Aorta (tissue), 5 donors: ENCODE measurements at regions of chr11 and their contacts with region 1.

Region 1: GRCh38 chr11:101775033-101775432 is 139.8 kb upstream of the CEP126 start:
- DNase-seq: no peak
- ATAC-seq: no peak
- H3K4me3 ChIP-seq: no peak overlapping the region
- H3K27ac ChIP-seq: no peak overlapping the region
- H3K4me1 ChIP-seq: peaks cover 3 to 4% of the 10 kb centered on the region in 2 donors
- H3K27me3 ChIP-seq: no peaks in the 10 kb centered on the region

Region 2: DNA sequence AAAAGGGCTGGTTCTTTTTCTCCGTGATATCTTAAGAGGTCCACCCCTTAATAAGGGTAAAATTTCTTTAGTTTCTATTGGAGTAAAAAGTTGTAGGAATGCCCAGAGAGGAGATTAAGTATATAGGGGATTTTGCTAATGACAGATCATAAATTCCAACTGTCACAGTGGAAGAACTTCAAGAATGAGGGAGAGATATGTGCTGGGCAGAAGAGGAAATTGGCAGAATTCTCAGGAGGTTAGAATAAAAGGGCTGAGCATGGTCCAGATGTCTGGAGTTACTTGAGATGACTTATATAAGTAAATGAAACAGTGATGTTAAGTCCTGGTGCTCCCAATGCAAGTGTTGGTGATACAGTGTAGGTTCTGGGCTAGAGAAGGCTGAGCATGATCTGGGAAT is 1505.5 kb before region 1 on chr11:
- intact Hi-C with region 1: loop called in 1 of 2 experiments (anchors 10 kb)
- DNase-seq: no peak
- ATAC-seq: no peak
- H3K4me3 ChIP-seq: no peak overlapping the region
- H3K27ac ChIP-seq: no peak overlapping the region
- H3K4me1 ChIP-seq: no peaks in the 10 kb centered on the region
- H3K27me3 ChIP-seq: no peaks in the 10 kb centered on the region

Region 3: GRCh38 chr11:101807531-101807930 is 32.5 kb after region 1 on chr11:
- intact Hi-C with region 1: no loop called
- DNase-seq: no peak
- ATAC-seq: no peak
- H3K4me3 ChIP-seq: no peak overlapping the region
- H3K27ac ChIP-seq: no peak overlapping the region
- H3K4me1 ChIP-seq: no peaks in the 10 kb centered on the region
- H3K27me3 ChIP-seq: no peaks in the 10 kb centered on the region

Region 4: GRCh38 chr11:101894505-101894904 is 119.5 kb after region 1 on chr11:
- intact Hi-C with region 1: no loop called
- DNase-seq: no peak
- ATAC-seq: no peak
- H3K4me3 ChIP-seq: no peak overlapping the region
- H3K27ac ChIP-seq: no peak overlapping the region
- H3K4me1 ChIP-seq: no peaks in the 10 kb centered on the region
- H3K27me3 ChIP-seq: no peaks in the 10 kb centered on the region